Heart right ventricle (tissue), 16 donors: ENCODE measurements at regions of chr5 and their contacts with region 1.

Region 1: GRCh38 chr5:42583322-42583721 is 160.1 kb downstream of the GHR start:
- DNase-seq: peak; percentile 22 to 72
- ATAC-seq: peak in 6 of 8 donors; percentile 26 to 47 (median 38)
- H3K4me3 ChIP-seq: no peak overlapping the region
- H3K27ac ChIP-seq: no peak overlapping the region
- H3K4me1 ChIP-seq: peaks cover 0 to 48% (median 28%) of the 10 kb centered on the region in 9 donors
- H3K27me3 ChIP-seq: no peaks in the 10 kb centered on the region
- CTCF ChIP-seq: peak; percentile 68 to 87 (median 80)

Region 2: GRCh38 chr5:42495914-42496313 is 87.4 kb before region 1 on chr5:
- intact Hi-C with region 1: loop called in 1 of 10 experiments (anchors 5 kb)
- DNase-seq: peak in 1 of 2 donors; percentile 31
- ATAC-seq: peak in 5 of 8 donors; percentile 36 to 63 (median 53)
- H3K4me3 ChIP-seq: no peak overlapping the region
- H3K27ac ChIP-seq: no peak overlapping the region
- H3K4me1 ChIP-seq: peaks cover 0 to 50% (median 38%) of the 10 kb centered on the region in 9 donors
- H3K27me3 ChIP-seq: no peaks in the 10 kb centered on the region
- CTCF ChIP-seq: no peak

Region 3: GRCh38 chr5:42514754-42515153 is 68.6 kb before region 1 on chr5:
- intact Hi-C with region 1: loop called in 1 of 10 experiments (anchors 5 kb)
- DNase-seq: no peak
- ATAC-seq: peak in 1 of 8 donors; percentile 29
- H3K4me3 ChIP-seq: no peak overlapping the region
- H3K27ac ChIP-seq: no peak overlapping the region
- H3K4me1 ChIP-seq: peaks cover 0 to 62% (median 25%) of the 10 kb centered on the region in 9 donors
- H3K27me3 ChIP-seq: no peaks in the 10 kb centered on the region
- CTCF ChIP-seq: peak in 3 of 9 donors; percentile 25 to 38 (median 35)

Region 4: DNA sequence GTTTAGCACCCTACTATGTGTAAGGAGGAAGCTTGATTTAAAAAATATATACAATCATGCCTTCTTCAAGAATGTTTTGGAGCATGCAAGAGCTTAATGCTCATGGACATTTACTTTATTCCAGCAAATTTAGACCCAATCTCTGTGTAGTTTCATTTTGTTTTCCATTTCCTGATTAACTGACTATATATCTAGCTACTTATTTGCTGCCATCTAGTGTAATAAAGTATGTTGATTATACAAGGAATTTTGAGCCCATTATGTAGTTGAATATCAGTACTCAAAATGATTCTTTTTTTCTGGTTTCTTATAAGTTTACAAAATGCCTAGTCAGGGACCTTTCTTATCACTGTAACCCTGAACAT is 73.3 kb after region 1 on chr5:
- intact Hi-C with region 1: loop called in 1 of 10 experiments (anchors 10 kb)
- DNase-seq: no peak
- ATAC-seq: peak in 4 of 8 donors; percentile 56 to 70 (median 65)
- H3K4me3 ChIP-seq: peak overlapping the region in 5 of 10 donors; percentile 15 to 35 (median 29)
- H3K27ac ChIP-seq: no peak overlapping the region
- H3K4me1 ChIP-seq: peaks cover 0 to 29% (median 25%) of the 10 kb centered on the region in 9 donors
- H3K27me3 ChIP-seq: no peaks in the 10 kb centered on the region
- CTCF ChIP-seq: peak in 7 of 9 donors; percentile 21 to 58 (median 47)

Region 5: GRCh38 chr5:42756606-42757601 is 173.6 kb after region 1 on chr5 and contains the start of gene CCDC152:
- intact Hi-C with region 1: no loop called
- DNase-seq: peak in 1 of 2 donors; percentile 5
- ATAC-seq: peak in 4 of 8 donors; percentile 38 to 70 (median 52)
- H3K4me3 ChIP-seq: peak within 1 kb of the TSS in 9 of 10 donors; percentile 13 to 48 (median 44)
- H3K27ac ChIP-seq: no peak within 1 kb of the TSS
- H3K4me1 ChIP-seq: peaks cover 0 to 10% (median 0%) of the 10 kb centered on the region in 9 donors
- H3K27me3 ChIP-seq: peaks cover 0 to 11% (median 0%) of the 10 kb centered on the region in 7 donors
- CTCF ChIP-seq: no peak
- total RNA-seq, gene CCDC152: 0.67 to 4.0 (median 1.6) TPM